ENCODE measurements at regions of chr5 and their contacts with region 1.

Region 1: GRCh38 chr5:82225525-82226172 is 52.5 kb downstream of the RPS23 start:
- DNase-seq: peak; percentile 37
- ATAC-seq: peak; percentile 97
- H3K4me3 ChIP-seq: no peak overlapping the region
- H3K27ac ChIP-seq: no peak overlapping the region
- H3K4me1 ChIP-seq: no peaks in the 10 kb centered on the region
- H3K27me3 ChIP-seq: no peaks in the 10 kb centered on the region
- CTCF ChIP-seq: peak; percentile 82 to 94 (median 89)
- EP300 ChIP-seq: no peak
- POLR2A ChIP-seq: no peak
- RAD21 ChIP-seq: peak; percentile 96

Region 2: GRCh38 chr5:81425569-81425968 is 800.1 kb before region 1 on chr5:
- CTCF ChIA-PET with region 1: interaction called, 46 read pairs
- POLR2A ChIA-PET with region 1: no interaction called
- RAD21 ChIA-PET with region 1: interaction called, 22 read pairs
- SMC1A ChIA-PET with region 1: interaction called, 8 read pairs
- in situ Hi-C with region 1: loop called (anchors 10 kb)
- intact Hi-C with region 1: loop called (anchors 2 kb)
- DNase-seq: no peak
- ATAC-seq: peak; percentile 84
- H3K4me3 ChIP-seq: no peak overlapping the region
- H3K27ac ChIP-seq: no peak overlapping the region
- H3K4me1 ChIP-seq: no peaks in the 10 kb centered on the region
- H3K27me3 ChIP-seq: no peaks in the 10 kb centered on the region
- CTCF ChIP-seq: peak; percentile 36 to 55 (median 48); a peak in 4 of 6 replicates
- EP300 ChIP-seq: no peak
- POLR2A ChIP-seq: no peak
- RAD21 ChIP-seq: peak; percentile 60

Region 3: DNA sequence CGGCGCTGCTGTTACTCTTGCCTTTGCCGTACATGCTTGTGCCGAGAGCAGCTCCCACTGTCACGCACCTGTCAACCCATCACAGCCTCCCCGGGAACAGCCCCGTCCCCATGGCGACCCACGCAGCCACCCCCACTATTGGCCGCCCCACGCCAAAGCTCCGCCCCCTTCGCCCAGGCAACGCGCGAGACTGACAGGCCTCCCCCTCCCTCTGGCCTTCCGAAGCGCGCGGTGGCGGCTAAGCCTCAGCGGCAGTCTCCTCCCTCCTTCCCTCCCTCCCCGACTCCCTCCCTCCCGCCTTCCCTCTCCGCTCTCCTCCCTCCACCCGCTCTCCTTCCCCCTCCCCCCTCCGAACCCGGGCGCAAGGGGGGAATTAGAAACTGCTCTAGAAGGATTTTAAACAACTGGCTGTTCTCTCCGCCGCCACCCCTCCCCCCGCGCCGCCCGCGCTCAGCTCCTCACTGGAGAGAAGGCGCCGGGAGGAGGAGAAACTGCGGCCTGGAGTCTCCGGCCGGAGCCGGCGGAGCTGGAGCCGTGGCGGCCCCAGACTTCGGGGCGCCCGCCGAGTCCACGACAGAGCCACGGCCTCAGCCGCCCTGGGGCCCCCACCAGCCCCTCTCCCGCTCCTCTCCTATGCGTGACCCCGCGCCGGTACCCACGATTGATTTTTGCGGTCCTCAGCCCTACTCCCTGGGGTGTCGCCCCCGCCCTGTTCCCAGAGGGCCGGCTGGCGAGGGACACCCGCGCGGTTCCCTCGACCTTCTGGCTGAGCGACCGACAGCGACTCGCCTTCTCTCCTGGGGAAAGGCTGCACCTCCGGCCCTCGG is 474.4 kb before region 1 on chr5 and contains the start of gene SSBP2:
- CTCF ChIA-PET with region 1: no interaction called
- POLR2A ChIA-PET with region 1: no interaction called
- RAD21 ChIA-PET with region 1: no interaction called
- SMC1A ChIA-PET with region 1: no interaction called
- in situ Hi-C with region 1: no loop called
- intact Hi-C with region 1: loop called (anchors 2 kb)
- DNase-seq: peak; percentile 95
- ATAC-seq: peak; percentile 82
- H3K4me3 ChIP-seq: peak within 1 kb of the TSS; percentile 81
- H3K27ac ChIP-seq: peak within 1 kb of the TSS; percentile 95
- H3K4me1 ChIP-seq: peaks cover 10% of the 10 kb centered on the region
- H3K27me3 ChIP-seq: no peaks in the 10 kb centered on the region
- CTCF ChIP-seq: no peak
- EP300 ChIP-seq: peak; percentile 60 to 99; a peak in 3 of 4 replicates
- POLR2A ChIP-seq: peak; percentile 85
- RAD21 ChIP-seq: peak; percentile 50
- polyA plus RNA-seq, gene SSBP2: 117 to 120 TPM

Region 4: GRCh38 chr5:81971712-81972495 is 253.7 kb before region 1 on chr5 and contains the start of gene ATG10:
- CTCF ChIA-PET with region 1: interaction called, 3 read pairs
- POLR2A ChIA-PET with region 1: no interaction called
- RAD21 ChIA-PET with region 1: no interaction called
- SMC1A ChIA-PET with region 1: no interaction called
- in situ Hi-C with region 1: no loop called
- intact Hi-C with region 1: loop called (anchors 10 kb)
- DNase-seq: peak; percentile 69
- ATAC-seq: peak; percentile 97
- H3K4me3 ChIP-seq: peak within 1 kb of the TSS; percentile 79
- H3K27ac ChIP-seq: peak within 1 kb of the TSS; percentile 90
- H3K4me1 ChIP-seq: no peaks in the 10 kb centered on the region
- H3K27me3 ChIP-seq: no peaks in the 10 kb centered on the region
- CTCF ChIP-seq: no peak
- EP300 ChIP-seq: no peak
- POLR2A ChIP-seq: peak; percentile 98
- RAD21 ChIP-seq: no peak
- polyA plus RNA-seq, gene ATG10: 7.5 to 9.0 TPM

Region 5: GRCh38 chr5:82174128-82174918 is 51.3 kb before region 1 on chr5:
- CTCF ChIA-PET with region 1: interaction called, 177 read pairs
- POLR2A ChIA-PET with region 1: interaction called, 4 read pairs
- RAD21 ChIA-PET with region 1: interaction called, 59 read pairs
- SMC1A ChIA-PET with region 1: interaction called, 159 read pairs
- in situ Hi-C with region 1: no loop called
- intact Hi-C with region 1: loop called (anchors 1 kb)
- DNase-seq: peak; percentile 83
- ATAC-seq: peak; percentile 94
- H3K4me3 ChIP-seq: peak overlapping the region; percentile 0; the same call in 1 of the 2 replicates
- H3K27ac ChIP-seq: peak overlapping the region; percentile 69
- H3K4me1 ChIP-seq: peaks cover 25% of the 10 kb centered on the region
- H3K27me3 ChIP-seq: no peaks in the 10 kb centered on the region
- CTCF ChIP-seq: peak; percentile 64 to 78 (median 76)
- EP300 ChIP-seq: peak; percentile 99 to 100
- POLR2A ChIP-seq: no peak
- RAD21 ChIP-seq: peak; percentile 65

Region 6: GRCh38 chr5:82197550-82197949 is 28.1 kb before region 1 on chr5:
- CTCF ChIA-PET with region 1: interaction called, 8 read pairs
- POLR2A ChIA-PET with region 1: no interaction called
- RAD21 ChIA-PET with region 1: no interaction called
- SMC1A ChIA-PET with region 1: interaction called, 10 read pairs
- in situ Hi-C with region 1: no loop called
- intact Hi-C with region 1: no loop called
- DNase-seq: no peak
- ATAC-seq: no peak
- H3K4me3 ChIP-seq: no peak overlapping the region
- H3K27ac ChIP-seq: no peak overlapping the region
- H3K4me1 ChIP-seq: no peaks in the 10 kb centered on the region
- H3K27me3 ChIP-seq: no peaks in the 10 kb centered on the region
- CTCF ChIP-seq: no peak
- EP300 ChIP-seq: no peak
- POLR2A ChIP-seq: no peak
- RAD21 ChIP-seq: no peak

Region 7: GRCh38 chr5:82259172-82259800 is 33.6 kb after region 1 on chr5:
- CTCF ChIA-PET with region 1: interaction called, 12 read pairs
- POLR2A ChIA-PET with region 1: no interaction called
- RAD21 ChIA-PET with region 1: interaction called, 4 read pairs
- SMC1A ChIA-PET with region 1: interaction called, 10 read pairs
- in situ Hi-C with region 1: no loop called
- intact Hi-C with region 1: no loop called
- DNase-seq: no peak
- ATAC-seq: peak; percentile 83
- H3K4me3 ChIP-seq: no peak overlapping the region
- H3K27ac ChIP-seq: no peak overlapping the region
- H3K4me1 ChIP-seq: no peaks in the 10 kb centered on the region
- H3K27me3 ChIP-seq: no peaks in the 10 kb centered on the region
- CTCF ChIP-seq: peak; percentile 40 to 45 (median 40); a peak in 4 of 6 replicates
- EP300 ChIP-seq: no peak
- POLR2A ChIP-seq: no peak
- RAD21 ChIP-seq: peak; percentile 46

Region 8: GRCh38 chr5:82620957-82621600 is 395.4 kb after region 1 on chr5:
- CTCF ChIA-PET with region 1: no interaction called
- POLR2A ChIA-PET with region 1: no interaction called
- RAD21 ChIA-PET with region 1: no interaction called
- SMC1A ChIA-PET with region 1: no interaction called
- in situ Hi-C with region 1: no loop called
- intact Hi-C with region 1: no loop called
- DNase-seq: no peak
- ATAC-seq: no peak
- H3K4me3 ChIP-seq: no peak overlapping the region
- H3K27ac ChIP-seq: no peak overlapping the region
- H3K4me1 ChIP-seq: no peaks in the 10 kb centered on the region
- H3K27me3 ChIP-seq: no peaks in the 10 kb centered on the region
- CTCF ChIP-seq: no peak
- EP300 ChIP-seq: no peak
- POLR2A ChIP-seq: no peak
- RAD21 ChIP-seq: no peak

Measured in GM12878 (cell line).